ENCODE measurements at regions of chr9 and their contacts with region 1.

Region 1: GRCh38 chr9:131334629-131335367 is 45.3 kb downstream of the PLPP7 start:
- H3K4me3 Mint-ChIP-seq: no peak overlapping the region
- H3K27ac Mint-ChIP-seq: no peak overlapping the region
- H3K4me1 Mint-ChIP-seq: no peaks in the 10 kb centered on the region
- H3K27me3 Mint-ChIP-seq: peaks cover 1% of the 10 kb centered on the region

Region 2: DNA sequence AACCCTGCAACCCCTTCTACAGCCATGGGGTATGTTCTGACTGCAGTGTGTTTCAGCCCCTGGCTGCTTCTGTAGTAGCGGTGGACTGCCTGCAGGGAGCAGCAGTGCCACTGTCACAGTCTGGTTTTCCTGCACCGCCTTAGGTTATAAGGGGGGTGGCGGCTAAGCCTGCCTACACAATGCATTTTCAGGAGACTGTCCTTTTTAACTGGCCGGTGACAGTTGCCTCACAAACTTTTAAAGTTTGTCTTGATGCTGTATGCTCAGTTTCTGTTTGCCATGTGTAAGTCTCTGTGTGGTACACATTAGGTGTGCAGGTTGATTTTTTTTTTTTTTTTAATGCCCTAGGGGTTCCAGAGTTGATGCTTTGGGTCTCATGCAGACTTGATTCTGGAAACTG is 156.4 kb before region 1 on chr9:
- intact Hi-C with region 1: loop called (anchors 1 kb)
- H3K4me3 Mint-ChIP-seq: no peak overlapping the region
- H3K27ac Mint-ChIP-seq: no peak overlapping the region
- H3K4me1 Mint-ChIP-seq: peaks cover 21% of the 10 kb centered on the region
- H3K27me3 Mint-ChIP-seq: no peaks in the 10 kb centered on the region

Region 3: GRCh38 chr9:131246618-131247017 is 88.2 kb before region 1 on chr9:
- intact Hi-C with region 1: loop called (anchors 5 kb)
- H3K4me3 Mint-ChIP-seq: no peak overlapping the region
- H3K27ac Mint-ChIP-seq: no peak overlapping the region
- H3K4me1 Mint-ChIP-seq: peaks cover 11% of the 10 kb centered on the region
- H3K27me3 Mint-ChIP-seq: no peaks in the 10 kb centered on the region

Measured in dendritic cell treated with granulocyte-macrophage colony-stimulating factor and Interleukin-4, amounts not matched to agents 40 ng/mL and 50 ng/mL, for 4 days (primary cell).